ENCODE measurements at regions of chr7 and their contacts with region 1.

Region 1: GRCh38 chr7:91557789-91558392 is 293.7 kb downstream of the FZD1 start:
- DNase-seq: no peak
- ATAC-seq: no peak
- H3K4me3 ChIP-seq: no peak overlapping the region
- H3K27ac ChIP-seq: no peak overlapping the region
- H3K4me1 ChIP-seq: no peaks in the 10 kb centered on the region
- H3K27me3 ChIP-seq: peaks cover 0 to 5% (median 0%) of the 10 kb centered on the region in 7 donors
- CTCF ChIP-seq: no peak

Region 2: DNA sequence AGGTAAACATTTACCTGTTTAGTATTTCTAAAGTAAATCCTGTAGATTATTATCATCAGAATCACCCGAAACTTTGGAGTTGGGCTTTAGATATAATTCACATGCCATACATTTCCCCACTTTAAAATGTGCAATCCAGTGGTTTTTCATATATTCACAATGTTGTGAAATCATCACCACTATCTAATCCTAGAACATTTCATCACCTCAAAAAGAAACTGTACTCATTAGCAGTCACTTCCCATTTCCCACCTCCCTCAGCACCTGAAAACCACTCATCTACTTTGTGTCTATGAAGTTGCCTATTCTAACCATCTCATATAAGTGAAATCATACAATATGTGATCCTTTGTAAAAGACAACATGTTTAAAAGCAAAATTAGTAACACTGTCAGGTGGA is 111.1 kb before region 1 on chr7:
- intact Hi-C with region 1: no loop called
- DNase-seq: no peak
- ATAC-seq: no peak
- H3K4me3 ChIP-seq: no peak overlapping the region
- H3K27ac ChIP-seq: no peak overlapping the region
- H3K4me1 ChIP-seq: no peaks in the 10 kb centered on the region
- H3K27me3 ChIP-seq: no peaks in the 10 kb centered on the region
- CTCF ChIP-seq: no peak

Region 3: DNA sequence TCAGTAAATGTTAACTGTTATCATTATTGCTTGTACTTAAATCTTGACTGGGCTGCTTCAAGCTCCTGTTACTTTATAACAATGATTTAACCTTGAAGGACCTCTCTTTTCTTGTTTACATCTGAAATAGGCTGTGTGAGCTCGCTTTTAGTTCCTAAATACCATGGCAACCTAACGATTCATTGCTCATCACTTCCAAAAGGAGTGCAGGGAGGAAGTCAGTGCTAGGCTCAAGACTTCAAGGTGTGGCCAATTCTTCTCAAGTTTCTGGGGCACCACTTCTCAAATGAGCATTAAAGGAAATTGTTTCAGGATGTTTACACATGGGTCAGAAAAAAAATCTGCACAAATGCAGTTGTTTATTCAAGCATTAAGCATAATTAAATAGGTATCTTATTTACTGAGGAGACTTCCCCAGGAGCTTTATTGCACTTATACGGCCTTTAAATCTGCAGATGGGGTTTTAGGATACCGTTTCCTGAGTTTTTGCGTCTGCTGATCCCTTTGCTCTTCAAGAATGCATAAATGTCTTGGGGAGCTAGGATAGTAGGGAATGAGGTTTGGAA is 38.5 kb after region 1 on chr7:
- intact Hi-C with region 1: no loop called
- DNase-seq: no peak
- ATAC-seq: no peak
- H3K4me3 ChIP-seq: no peak overlapping the region
- H3K27ac ChIP-seq: no peak overlapping the region
- H3K4me1 ChIP-seq: no peaks in the 10 kb centered on the region
- H3K27me3 ChIP-seq: no peaks in the 10 kb centered on the region
- CTCF ChIP-seq: no peak

Region 4: GRCh38 chr7:92763636-92764423 is 1205.9 kb after region 1 on chr7:
- intact Hi-C with region 1: loop called in 1 of 10 experiments (anchors 5 kb)
- DNase-seq: no peak
- ATAC-seq: peak in 2 of 8 donors; percentile 57 to 59
- H3K4me3 ChIP-seq: no peak overlapping the region
- H3K27ac ChIP-seq: no peak overlapping the region
- H3K4me1 ChIP-seq: peaks cover 4 to 47% (median 25%) of the 10 kb centered on the region in 9 donors
- H3K27me3 ChIP-seq: no peaks in the 10 kb centered on the region
- CTCF ChIP-seq: no peak

Measured in heart right ventricle (tissue), 16 donors.